ENCODE measurements at regions of chr5 and their contacts with region 1.

Region 1: GRCh38 chr5:138065102-138065501 is 18.7 kb upstream of the WNT8A start:
- DNase-seq: no peak
- H3K4me3 ChIP-seq: no peak overlapping the region
- H3K27ac ChIP-seq: no peak overlapping the region
- H3K4me1 ChIP-seq: no peaks in the 10 kb centered on the region
- H3K27me3 ChIP-seq: no peaks in the 10 kb centered on the region
- CTCF ChIP-seq: no peak
- POLR2A ChIP-seq: no peak

Region 2: DNA sequence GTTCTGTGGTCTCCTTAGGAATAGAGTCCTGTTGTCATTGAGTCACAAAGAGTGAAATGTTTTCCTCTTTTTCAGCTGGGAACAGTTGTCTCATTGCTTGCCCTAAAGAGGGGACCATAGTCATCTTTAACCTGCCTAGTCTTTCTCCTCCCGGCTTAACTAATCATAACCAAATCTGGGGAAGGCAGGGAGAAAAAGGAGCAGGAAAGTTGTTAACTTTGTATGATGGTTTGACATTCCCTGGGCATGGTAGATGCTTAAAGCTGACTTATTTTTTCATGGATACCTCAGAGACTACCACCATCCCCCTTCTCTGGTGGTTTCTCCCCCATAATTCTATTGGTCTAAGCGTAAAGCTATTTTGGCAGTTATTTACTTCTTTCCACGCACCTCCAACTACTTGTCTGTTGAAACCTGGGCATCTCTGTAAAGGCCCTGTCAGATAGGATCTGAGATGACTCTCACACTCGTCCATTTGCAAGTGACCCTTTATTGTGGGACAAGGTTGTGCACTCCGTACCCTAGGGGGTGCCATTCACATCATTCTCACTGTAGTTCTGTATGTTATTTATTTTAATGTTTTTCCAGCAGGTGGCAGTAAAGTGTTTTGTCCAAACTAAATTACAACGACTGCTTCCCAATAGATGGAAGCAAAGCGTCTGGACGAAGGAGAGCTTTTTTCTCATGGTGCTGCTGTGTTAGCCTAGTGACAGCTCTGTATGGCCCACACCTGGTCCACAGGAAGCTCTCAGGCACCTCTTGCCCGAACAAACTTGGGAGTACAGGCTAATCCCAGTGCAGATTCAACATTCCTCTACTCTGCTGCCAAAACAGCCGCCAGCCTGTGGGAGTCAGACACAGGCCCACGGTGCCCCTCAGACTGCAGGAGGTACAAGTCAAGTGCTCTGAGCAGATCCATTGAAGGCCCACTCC is 29.2 kb before region 1 on chr5:
- intact Hi-C with region 1: loop called (anchors 2 kb)
- DNase-seq: peak; percentile 15
- H3K4me3 ChIP-seq: no peak overlapping the region
- H3K27ac ChIP-seq: no peak overlapping the region
- H3K4me1 ChIP-seq: no peaks in the 10 kb centered on the region
- H3K27me3 ChIP-seq: no peaks in the 10 kb centered on the region
- CTCF ChIP-seq: peak; percentile 50 to 85 (median 81)
- POLR2A ChIP-seq: no peak